ENCODE measurements at regions of chr19 and their contacts with region 1.

Region 1: DNA sequence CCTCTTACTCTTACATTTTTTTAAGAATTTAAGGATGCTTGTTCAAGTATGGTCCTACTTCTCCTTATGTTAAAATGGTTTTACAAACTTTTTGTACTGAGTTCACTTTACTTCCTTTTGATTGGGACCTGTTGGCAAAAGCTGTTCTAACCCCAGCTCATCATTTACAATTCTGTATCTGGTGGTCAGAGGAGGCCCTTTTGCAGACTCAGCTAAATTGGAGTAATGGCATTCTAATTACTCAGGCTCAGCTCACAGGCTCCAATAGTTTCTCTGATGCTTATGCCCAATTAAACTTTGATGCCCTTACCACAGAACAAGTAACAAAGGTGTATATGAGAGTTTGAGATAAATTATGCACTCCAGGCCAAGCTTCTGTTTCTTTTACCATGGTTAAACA is 1632.0 kb downstream of the UQCRFS1 start:
- DNase-seq: no peak
- ATAC-seq: no peak

Region 2: DNA sequence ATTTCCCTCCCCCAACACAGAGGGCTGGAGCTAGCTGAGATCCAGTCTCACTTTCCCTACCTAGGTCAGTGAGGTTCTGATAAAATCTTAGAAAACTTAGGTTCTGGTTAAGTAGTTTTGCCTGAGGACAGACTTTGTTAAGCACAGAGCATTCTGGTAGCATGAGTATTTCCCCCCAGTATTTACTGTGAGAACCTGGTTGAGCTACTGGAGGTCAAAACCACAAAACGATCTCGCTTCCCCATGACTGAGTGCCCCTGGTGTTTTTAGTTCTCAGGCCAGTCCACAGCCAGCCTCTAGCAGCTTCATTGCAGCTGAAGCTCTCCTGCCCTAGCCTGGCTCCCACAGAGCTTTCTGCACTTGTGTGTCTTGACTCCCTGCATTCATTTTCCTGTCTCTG is 493.8 kb after region 1 on chr19:
- intact Hi-C with region 1: loop called in 1 of 2 experiments (anchors 10 kb)
- DNase-seq: no peak
- ATAC-seq: no peak